ENCODE measurements at regions of chr18 and their contacts with region 1.

Region 1: GRCh38 chr18:77054606-77055428 is 77.8 kb downstream of the MBP start:
- DNase-seq: peak; percentile 89 to 94
- ATAC-seq: peak; percentile 67
- H3K4me3 ChIP-seq: no peak overlapping the region
- H3K27ac ChIP-seq: no peak overlapping the region
- H3K4me1 ChIP-seq: no peaks in the 10 kb centered on the region
- H3K27me3 ChIP-seq: no peaks in the 10 kb centered on the region

Region 2: DNA sequence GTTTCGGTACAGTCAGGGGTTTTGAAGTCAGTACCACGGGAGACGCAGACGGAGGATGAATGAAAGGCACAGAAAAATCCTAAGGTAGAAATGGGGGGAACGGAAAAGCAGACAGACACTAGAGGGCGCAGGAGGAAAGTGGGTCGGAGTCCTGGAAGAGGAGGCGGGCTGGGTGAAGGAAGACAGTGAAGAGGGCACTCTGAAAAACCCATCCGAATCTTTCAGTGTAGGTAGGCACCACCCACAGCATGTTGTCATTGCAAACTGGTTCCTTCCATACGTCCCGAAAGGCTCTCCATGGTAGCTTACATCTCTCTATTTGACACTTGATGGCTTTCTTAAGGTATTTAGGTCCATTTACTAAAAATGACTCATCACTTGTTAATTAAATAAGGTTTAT is 251.0 kb before region 1 on chr18:
- intact Hi-C with region 1: no loop called
- DNase-seq: peak in 1 of 2 donors; percentile 63
- ATAC-seq: peak; percentile 55
- H3K4me3 ChIP-seq: no peak overlapping the region
- H3K27ac ChIP-seq: no peak overlapping the region
- H3K4me1 ChIP-seq: no peaks in the 10 kb centered on the region
- H3K27me3 ChIP-seq: no peaks in the 10 kb centered on the region

Region 3: GRCh38 chr18:77207540-77207939 is 152.7 kb after region 1 on chr18:
- intact Hi-C with region 1: loop called in 1 of 2 experiments (anchors 5 kb)
- DNase-seq: peak; percentile 80 to 90
- ATAC-seq: peak; percentile 87
- H3K4me3 ChIP-seq: no peak overlapping the region
- H3K27ac ChIP-seq: peak overlapping the region in 1 of 2 donors; percentile 13
- H3K4me1 ChIP-seq: no peaks in the 10 kb centered on the region
- H3K27me3 ChIP-seq: no peaks in the 10 kb centered on the region

Region 4: DNA sequence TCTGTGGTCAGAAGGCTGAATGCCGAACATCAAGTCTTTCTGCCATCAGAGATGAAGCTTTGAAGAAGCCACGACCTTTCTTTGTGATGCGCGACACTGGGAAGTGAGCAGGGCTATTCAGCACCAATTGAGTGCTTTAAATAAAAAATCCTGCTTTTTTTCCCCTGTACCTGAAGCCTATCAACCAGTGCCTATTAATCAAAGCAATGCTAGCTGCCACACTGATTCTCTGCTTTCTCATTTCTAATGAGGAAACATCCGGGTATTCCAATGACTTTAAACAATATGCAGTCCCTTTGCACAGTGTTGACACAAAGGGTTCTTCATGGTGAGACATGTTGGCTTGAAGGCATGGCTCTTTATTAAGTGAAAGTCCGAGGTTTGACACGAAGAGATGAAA is 282.8 kb after region 1 on chr18:
- intact Hi-C with region 1: no loop called
- DNase-seq: no peak
- ATAC-seq: no peak
- H3K4me3 ChIP-seq: no peak overlapping the region
- H3K27ac ChIP-seq: no peak overlapping the region
- H3K4me1 ChIP-seq: no peaks in the 10 kb centered on the region
- H3K27me3 ChIP-seq: no peaks in the 10 kb centered on the region

Measured in aorta (tissue), 5 donors.